ENCODE measurements at regions of chrX and their contacts with region 1.

Region 1: GRCh38 chrX:15674841-15675489 is 10.4 kb upstream of the CLTRN start:
- DNase-seq: peak; percentile 94 to 99
- H3K4me3 ChIP-seq: peak overlapping the region; percentile 80 to 87
- H3K27ac ChIP-seq: peak overlapping the region; percentile 97 to 99
- H3K4me1 ChIP-seq: peaks cover 0 to 8% of the 10 kb centered on the region in 2 donors
- H3K27me3 ChIP-seq: no peaks in the 10 kb centered on the region
- CTCF ChIP-seq: no peak

Region 2: GRCh38 chrX:14029425-14030173 is 1645.4 kb before region 1 on chrX and contains the start of gene GEMIN8:
- intact Hi-C with region 1: loop called (anchors 5 kb)
- DNase-seq: peak; percentile 38 to 94
- H3K4me3 ChIP-seq: peak within 1 kb of the TSS; percentile 84 to 88
- H3K27ac ChIP-seq: peak within 1 kb of the TSS; percentile 73 to 88
- H3K4me1 ChIP-seq: peaks cover 0 to 16% of the 10 kb centered on the region in 2 donors
- H3K27me3 ChIP-seq: no peaks in the 10 kb centered on the region
- CTCF ChIP-seq: no peak
- total RNA-seq, gene GEMIN8: 1.5 TPM

Region 3: DNA sequence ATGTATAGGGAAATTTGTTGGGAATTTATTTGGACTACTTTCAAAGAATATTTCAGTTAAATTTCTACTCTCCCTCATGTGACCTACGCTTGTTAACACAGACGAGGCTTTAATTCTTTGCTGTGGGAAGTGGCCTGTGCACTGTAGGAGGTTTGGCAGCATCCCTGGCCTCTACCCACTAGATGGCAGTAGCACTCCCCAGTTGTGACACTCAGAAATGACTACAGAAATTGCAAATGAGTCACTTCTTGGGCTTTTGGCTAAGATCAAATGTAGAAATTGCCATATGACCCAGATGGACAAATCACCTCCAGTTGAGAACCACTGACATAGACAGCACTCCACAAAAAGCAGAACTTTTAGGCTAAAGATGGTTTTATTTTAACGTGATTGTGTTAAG is 203.9 kb before region 1 on chrX:
- intact Hi-C with region 1: loop called (anchors 2 kb)
- DNase-seq: peak in 1 of 2 donors; percentile 82
- H3K4me3 ChIP-seq: no peak overlapping the region
- H3K27ac ChIP-seq: no peak overlapping the region
- H3K4me1 ChIP-seq: no peaks in the 10 kb centered on the region
- H3K27me3 ChIP-seq: no peaks in the 10 kb centered on the region
- CTCF ChIP-seq: peak; percentile 44 to 72 (median 64)

Region 4: GRCh38 chrX:15737960-15738902 is 63.3 kb after region 1 on chrX and contains the start of gene CA5B:
- intact Hi-C with region 1: loop called (anchors 1 kb)
- DNase-seq: peak; percentile 85 to 98
- H3K4me3 ChIP-seq: peak within 1 kb of the TSS; percentile 59 to 80
- H3K27ac ChIP-seq: peak within 1 kb of the TSS; percentile 66 to 75
- H3K4me1 ChIP-seq: peaks cover 0 to 3% of the 10 kb centered on the region in 2 donors
- H3K27me3 ChIP-seq: no peaks in the 10 kb centered on the region
- CTCF ChIP-seq: no peak
- total RNA-seq, gene CA5B: 13.5 TPM

Region 5: GRCh38 chrX:15789979-15790768 is 115.2 kb after region 1 on chrX and contains the start of gene ZRSR2:
- intact Hi-C with region 1: loop called (anchors 1 kb)
- DNase-seq: peak; percentile 41 to 94
- H3K4me3 ChIP-seq: peak within 1 kb of the TSS; percentile 80 to 90
- H3K27ac ChIP-seq: peak within 1 kb of the TSS; percentile 85
- H3K4me1 ChIP-seq: peaks cover 4 to 12% of the 10 kb centered on the region in 2 donors
- H3K27me3 ChIP-seq: no peaks in the 10 kb centered on the region
- CTCF ChIP-seq: no peak
- total RNA-seq, gene ZRSR2: 0.64 TPM

Region 6: DNA sequence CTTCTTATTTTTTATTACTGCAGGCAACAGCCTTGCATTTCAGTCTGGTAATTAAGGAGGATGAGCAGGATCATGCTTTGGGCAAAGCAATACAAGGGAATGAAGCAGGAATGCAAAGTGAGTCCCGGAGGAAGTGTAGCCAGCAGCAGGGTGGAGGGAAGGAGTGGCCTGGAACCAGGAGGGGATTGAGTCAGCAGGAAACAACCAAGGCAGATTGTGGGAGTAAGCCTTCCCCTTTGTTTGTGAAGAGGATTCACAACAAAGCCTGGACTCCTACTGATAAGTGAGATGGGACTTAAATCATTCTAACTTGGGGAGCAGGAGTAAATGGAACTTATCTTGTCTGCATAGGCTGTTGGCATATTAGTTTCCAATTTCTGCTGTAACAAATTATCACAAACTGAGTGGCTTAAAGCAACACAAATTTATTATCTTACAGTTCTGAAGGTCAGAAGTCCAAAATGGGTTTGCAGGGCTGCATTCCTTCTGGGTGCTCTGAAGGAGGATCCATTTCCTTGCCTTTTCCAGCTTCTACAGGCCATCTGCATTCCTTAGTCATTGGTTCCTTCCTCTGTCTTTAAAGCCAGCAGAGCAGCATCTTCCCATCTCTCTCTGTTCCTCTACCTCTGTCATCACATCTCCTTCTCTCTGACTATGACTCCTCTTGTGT is 272.8 kb after region 1 on chrX:
- intact Hi-C with region 1: no loop called
- DNase-seq: no peak
- H3K4me3 ChIP-seq: no peak overlapping the region
- H3K27ac ChIP-seq: no peak overlapping the region
- H3K4me1 ChIP-seq: no peaks in the 10 kb centered on the region
- H3K27me3 ChIP-seq: no peaks in the 10 kb centered on the region
- CTCF ChIP-seq: no peak

Region 7: GRCh38 chrX:16719334-16720084 is 1044.5 kb after region 1 on chrX and contains the start of gene SYAP1:
- intact Hi-C with region 1: loop called (anchors 2 kb)
- DNase-seq: peak; percentile 94 to 99
- H3K4me3 ChIP-seq: peak within 1 kb of the TSS; percentile 86 to 93
- H3K27ac ChIP-seq: peak within 1 kb of the TSS; percentile 93 to 98
- H3K4me1 ChIP-seq: peaks cover 0 to 16% of the 10 kb centered on the region in 2 donors
- H3K27me3 ChIP-seq: no peaks in the 10 kb centered on the region
- CTCF ChIP-seq: no peak
- total RNA-seq, gene SYAP1: 14.2 TPM